Right ventricle myocardium inferior (tissue), 1 donor: ENCODE measurements at regions of chr14 and their contacts with region 1.

Region 1: GRCh38 chr14:55026793-55027561 is at the starts of genes SOCS4 and WDHD1:
- DNase-seq: peak; percentile 97
- ATAC-seq: peak; percentile 99
- total RNA-seq, gene SOCS4: 14.0 TPM
- total RNA-seq, gene WDHD1: 1.9 TPM

Region 2: GRCh38 chr14:54981698-54982097 is 45.3 kb before region 1 on chr14:
- intact Hi-C with region 1: no loop called
- DNase-seq: no peak
- ATAC-seq: no peak

Region 3: DNA sequence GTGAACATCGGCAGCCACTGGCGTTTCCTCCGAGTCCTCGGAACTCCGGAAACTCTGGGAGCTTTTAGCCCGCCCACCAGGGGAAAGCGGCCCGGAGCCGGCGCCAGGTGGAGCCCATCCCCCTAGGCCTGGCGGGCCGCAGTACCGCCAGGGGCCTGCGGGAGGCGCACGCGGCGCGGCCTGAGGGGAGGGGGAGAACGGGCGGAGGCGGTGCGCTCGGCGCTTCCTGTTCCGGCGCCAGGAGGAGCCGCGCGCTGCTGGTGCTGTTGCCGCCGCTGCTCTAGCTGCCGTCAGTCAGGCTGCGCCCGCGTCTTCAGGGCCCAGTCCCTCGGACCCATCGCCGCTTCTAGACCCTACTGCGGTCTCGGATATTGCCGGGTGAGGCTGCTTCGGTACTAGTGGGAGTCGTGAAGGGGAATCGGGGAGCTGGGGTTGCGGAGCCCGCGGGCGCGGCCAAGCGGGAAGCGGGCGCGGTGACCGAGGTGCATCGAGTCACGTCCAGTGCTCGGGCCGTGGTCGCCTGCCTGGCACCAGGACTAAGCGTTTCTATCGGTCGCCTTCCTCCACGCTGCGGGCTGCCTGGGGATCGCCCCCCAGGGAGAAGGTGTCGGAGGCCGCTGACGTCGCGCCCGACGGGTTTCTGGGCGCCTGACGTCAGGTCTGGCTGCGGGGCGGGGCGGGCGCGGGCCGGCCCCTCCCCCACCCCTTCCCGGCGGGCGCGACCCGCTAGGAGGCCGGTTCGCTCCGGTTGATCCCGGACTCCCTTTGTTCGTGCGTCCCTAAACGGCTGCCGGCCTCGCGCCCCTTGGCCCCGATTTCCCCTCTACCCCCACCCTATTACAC is 24.7 kb after region 1 on chr14 and contains the start of gene MAPK1IP1L:
- intact Hi-C with region 1: loop called (anchors 1 kb)
- DNase-seq: peak; percentile 95
- ATAC-seq: peak; percentile 98
- total RNA-seq, gene MAPK1IP1L: 65.0 TPM

Region 4: DNA sequence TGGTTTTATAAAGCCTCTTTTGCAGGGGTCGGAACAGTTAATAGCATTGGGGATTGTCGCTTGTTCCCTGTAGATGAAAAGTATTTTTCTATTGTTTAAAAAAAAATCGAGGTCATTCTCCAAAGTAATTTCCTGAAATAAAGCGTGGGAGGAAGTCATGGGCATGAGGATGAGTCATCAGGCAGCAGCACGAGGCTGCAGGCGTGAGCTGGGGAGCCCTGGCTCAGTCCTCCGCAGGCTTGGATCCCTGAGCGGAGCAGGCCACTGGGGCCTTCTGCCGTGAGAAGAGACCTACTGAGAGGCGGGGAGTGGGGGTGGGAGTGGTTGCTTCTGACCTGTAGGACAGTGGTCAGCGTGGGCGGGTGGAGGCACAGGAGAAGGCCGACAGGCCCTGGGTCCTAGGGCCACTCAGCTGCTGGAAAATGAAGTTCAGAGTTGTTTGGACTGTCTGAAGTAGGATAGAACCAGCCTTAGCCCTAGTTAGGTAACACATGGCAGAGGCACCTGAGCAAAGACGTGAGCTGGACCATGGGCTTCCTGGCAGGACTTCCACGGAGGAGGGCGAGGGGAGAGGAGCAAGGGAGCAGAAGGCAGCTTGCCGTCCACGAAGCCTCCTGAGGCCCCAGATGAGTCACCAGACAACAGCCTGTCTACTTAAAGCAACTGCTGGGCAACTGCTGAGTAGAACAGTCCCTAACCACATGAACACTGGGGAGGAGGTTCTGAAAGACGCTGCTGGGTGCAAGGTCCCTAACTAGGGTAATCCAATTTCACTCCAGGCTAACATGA is 81.0 kb after region 1 on chr14:
- intact Hi-C with region 1: no loop called
- DNase-seq: peak; percentile 91
- ATAC-seq: peak; percentile 92